ENCODE measurements at regions of chr12 and their contacts with region 1.

Region 1: GRCh38 chr12:958588-959123 is 9.2 kb upstream of the RAD52 start:
- DNase-seq: no peak
- H3K4me3 ChIP-seq: no peak overlapping the region
- H3K27ac ChIP-seq: no peak overlapping the region
- H3K4me1 ChIP-seq: no peaks in the 10 kb centered on the region
- H3K27me3 ChIP-seq: no peaks in the 10 kb centered on the region
- CTCF ChIP-seq: no peak
- POLR2A ChIP-seq: no peak

Region 2: DNA sequence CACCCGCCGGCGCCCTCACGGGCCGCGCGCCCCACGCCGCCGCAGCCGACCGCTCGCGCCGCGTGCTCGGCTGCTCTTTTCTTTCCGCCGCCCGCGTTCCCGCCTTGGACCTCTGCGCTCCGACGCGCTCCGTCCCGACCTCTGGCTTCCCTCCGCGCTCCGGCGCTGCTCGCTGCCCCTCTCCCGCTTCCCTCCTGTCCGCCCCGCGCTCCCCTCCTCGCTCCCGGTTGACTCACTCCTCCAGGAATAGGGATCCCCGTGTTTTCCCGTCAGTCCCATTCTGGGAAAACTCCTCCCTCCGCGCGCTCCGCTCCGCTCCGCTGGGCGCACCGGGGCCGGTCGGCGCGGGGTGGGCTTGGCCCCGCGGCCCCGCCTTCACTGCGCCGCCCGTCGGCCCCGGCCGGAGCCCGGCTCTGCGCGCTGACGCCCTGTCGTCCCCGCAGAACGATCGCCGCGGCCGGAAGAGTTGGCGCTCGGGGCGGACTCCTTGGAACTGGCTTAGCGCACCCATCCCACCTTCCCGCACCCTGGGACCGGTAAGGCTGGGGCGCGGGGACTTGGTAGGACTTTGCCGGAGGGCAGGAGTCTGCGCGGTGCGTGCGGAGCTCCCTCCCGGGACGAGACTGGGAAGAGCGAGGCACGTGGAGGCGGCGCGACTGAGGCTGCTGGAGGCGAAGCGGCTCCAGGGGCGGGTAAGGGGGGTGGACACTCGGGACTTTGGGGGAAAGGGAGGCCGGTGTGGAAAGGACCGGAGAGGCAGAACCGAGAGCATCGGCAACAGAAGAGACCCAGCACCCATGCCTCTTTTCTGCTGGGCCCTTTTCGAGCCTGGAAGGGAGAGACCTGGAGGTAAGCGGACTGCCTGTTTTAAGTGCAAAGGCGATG is 2001.1 kb after region 1 on chr12:
- intact Hi-C with region 1: loop called (anchors 5 kb)
- DNase-seq: no peak
- H3K4me3 ChIP-seq: peak overlapping the region; percentile 73 to 81
- H3K27ac ChIP-seq: peak overlapping the region; percentile 57
- H3K4me1 ChIP-seq: peaks cover 33% of the 10 kb centered on the region
- H3K27me3 ChIP-seq: no peaks in the 10 kb centered on the region
- CTCF ChIP-seq: no peak
- POLR2A ChIP-seq: no peak